ENCODE measurements at regions of chr6 and their contacts with region 1.

Region 1: DNA sequence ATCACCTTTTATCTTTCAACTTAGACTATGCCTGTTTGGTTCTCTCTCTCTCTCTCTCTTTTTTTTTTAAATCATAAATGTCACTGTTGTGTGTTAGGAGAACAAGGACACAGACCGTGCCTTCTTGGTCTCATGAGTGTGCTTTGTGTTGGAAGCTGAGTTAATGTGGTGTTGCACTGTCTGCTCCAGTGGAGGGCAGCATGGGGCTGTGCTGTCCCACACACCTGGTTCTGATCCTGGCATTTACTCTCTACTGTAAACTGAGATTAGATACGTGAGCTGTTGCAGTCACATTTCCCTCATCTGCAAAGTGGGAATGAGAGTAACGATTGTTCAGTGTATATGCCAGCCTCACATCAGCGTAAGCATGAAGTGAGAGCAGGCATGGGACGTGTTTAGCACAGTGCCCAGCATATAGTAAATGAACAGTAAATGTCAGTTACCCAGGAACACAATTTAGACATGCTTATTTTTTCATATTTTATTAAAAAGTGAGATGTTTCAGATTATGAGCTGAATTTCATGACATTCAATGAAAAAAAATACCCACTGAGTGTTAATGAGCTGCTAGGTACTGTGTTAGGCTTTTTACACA is 161.1 kb downstream of the FARS2 start:
- DNase-seq: no peak
- H3K4me3 ChIP-seq: no peak overlapping the region
- CTCF ChIP-seq: peak; percentile 87

Region 2: GRCh38 chr6:5125152-5126006 is 297.0 kb before region 1 on chr6:
- CTCF ChIA-PET with region 1: no interaction called
- POLR2A ChIA-PET with region 1: no interaction called
- DNase-seq: no peak
- H3K4me3 ChIP-seq: no peak overlapping the region
- CTCF ChIP-seq: no peak

Region 3: DNA sequence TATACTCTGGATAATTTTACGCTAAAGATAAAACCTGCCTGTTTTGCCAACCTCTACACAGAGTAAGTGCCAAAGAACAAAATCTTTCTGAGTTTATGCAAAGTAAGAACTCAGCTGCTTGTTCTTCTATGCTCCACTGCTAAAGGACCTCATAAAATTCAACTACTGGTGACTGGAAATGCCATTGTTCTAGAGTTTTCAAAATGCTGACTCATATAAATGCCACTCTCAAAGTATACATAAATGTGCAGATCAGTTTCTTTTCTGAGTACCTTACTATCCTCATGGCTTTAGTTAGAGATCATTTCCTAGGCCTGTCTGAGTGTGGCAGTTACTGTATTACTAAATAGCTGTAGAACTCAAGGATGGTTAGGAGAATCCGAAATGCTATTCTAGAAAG is 207.3 kb before region 1 on chr6:
- CTCF ChIA-PET with region 1: no interaction called
- POLR2A ChIA-PET with region 1: no interaction called
- DNase-seq: no peak
- H3K4me3 ChIP-seq: no peak overlapping the region
- CTCF ChIP-seq: no peak

Region 4: GRCh38 chr6:5412017-5412416 is 10.4 kb before region 1 on chr6:
- CTCF ChIA-PET with region 1: interaction called, 17 read pairs
- POLR2A ChIA-PET with region 1: no interaction called
- DNase-seq: no peak
- H3K4me3 ChIP-seq: no peak overlapping the region
- CTCF ChIP-seq: no peak

Region 5: GRCh38 chr6:5433324-5433723 is 10.9 kb after region 1 on chr6:
- CTCF ChIA-PET with region 1: interaction called, 13 read pairs
- POLR2A ChIA-PET with region 1: no interaction called
- DNase-seq: no peak
- H3K4me3 ChIP-seq: no peak overlapping the region
- CTCF ChIP-seq: no peak

Region 6: DNA sequence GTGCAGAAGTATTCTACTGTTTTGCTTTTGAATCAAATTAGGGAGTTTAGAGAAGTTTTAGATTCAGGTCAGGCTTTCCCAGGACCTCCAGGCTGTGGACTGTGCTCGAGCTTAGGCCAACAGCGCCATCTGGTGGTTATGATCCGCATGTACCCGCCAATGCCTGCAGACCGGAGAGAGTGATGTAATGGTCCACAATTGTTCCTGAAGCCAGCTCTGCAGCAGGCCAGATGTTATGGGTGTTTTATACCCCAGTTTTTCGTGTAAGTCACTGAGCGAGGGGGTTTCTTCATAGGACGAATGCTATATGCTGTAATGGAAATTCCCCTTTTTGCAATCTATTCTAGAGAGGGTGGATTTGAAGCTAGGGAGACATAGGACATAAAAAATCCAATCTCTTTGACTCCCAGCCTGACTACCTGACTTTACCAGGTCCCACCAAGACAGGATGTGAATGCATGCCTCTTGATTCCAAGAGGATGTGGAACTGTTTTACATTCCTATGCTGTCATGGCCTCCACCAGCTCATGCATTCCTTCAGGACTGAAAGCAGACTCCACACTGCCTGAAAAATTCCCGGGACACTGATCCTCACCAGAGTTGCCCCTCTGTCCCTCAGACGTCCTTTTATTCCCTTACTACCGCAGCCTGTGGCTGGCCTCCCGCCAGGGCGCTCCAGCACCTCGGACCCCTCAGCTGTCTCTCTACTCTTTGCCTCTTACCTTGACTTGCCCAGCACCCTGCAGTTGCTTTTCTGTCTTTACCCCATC is 1124.9 kb after region 1 on chr6:
- CTCF ChIA-PET with region 1: interaction called, 12 read pairs
- POLR2A ChIA-PET with region 1: no interaction called
- DNase-seq: peak; percentile 21
- H3K4me3 ChIP-seq: peak overlapping the region; percentile 40
- CTCF ChIP-seq: peak; percentile 91